ENCODE measurements at regions of chr6 and their contacts with region 1.

Region 1: DNA sequence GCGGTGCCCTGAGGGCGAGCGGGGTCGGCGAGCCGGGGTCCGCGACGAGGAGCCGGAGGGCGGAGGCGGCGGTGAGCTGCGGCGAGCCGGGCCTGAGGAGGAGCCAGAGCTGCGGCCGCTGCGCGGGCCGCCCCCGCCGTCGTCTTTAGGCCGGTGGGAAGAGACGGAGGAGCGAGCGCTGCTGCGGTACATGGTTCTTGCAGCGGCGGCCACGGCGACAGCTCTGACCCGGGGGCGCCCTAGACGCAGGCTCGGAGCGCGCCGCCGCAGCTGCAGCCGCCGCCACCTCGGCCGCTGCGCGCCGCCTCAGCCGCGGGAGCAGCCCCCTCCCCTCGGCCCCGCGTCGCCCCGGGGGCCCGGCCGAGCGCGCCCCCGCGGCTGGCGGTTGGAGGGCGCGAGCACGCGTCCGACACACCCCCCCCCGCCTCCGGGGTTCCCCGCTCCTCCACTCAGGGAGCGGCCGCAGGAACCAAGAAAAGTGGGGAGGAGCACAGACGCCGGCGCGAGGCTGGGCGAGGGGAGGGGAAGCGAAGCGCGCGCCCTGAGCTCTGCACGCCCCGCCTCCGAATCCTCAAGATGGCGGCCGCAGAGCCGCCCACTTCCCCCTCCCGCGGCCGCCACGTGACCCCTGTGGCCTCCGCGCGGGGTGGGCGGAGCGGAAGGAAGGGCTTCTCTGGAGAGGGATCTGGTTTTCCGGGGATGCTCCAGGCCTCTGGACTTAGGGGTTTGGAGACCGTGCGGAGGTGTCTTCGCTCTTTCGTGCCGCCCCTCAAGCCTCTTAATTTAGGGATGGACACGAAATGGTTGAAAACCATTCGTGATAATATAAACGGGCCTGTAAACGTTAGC is at the start of gene ZNF318:
- DNase-seq: peak; percentile 97
- ATAC-seq: peak; percentile 97
- H3K4me3 Mint-ChIP-seq: peak within 1 kb of the TSS; percentile 86
- H3K27ac Mint-ChIP-seq: peak within 1 kb of the TSS; percentile 95
- H3K4me1 Mint-ChIP-seq: peaks cover 37% of the 10 kb centered on the region
- H3K27me3 Mint-ChIP-seq: no peaks in the 10 kb centered on the region
- total RNA-seq, gene ZNF318: 11.2 to 12.9 TPM

Region 2: DNA sequence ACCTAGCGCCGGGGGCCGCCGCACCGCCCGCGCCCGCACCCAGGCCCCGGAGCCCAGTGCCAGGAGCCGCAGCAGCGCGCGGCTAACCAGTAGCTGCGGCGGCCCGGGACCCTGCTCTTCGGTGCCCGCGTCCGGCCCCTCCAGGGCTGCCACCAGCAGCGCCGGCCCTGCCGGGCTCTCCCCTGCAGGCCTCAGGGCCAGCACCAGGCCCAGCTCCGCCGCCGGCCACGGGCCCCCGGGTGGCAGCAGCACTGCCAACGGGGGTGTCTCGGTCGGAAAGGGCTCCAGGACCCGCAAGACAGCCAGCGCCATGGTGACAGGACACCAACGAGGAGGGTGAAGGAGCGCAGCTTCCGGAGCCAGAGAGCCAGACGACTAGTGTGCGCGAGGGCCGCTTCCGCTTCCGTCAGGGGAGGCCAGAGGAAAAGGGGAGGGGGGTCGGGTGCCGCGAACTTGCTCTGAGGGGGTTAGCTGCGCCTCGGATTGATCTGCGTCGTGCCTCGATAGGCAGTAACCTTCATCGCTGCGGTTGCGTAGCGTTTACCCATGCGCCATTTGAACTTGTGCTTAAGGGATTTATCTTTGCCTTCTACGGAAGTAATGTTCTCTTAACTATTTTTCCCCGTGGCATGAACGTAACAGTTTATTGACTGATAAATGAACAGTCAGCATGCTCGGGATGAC is 390.4 kb before region 1 on chr6 and contains the start of gene PEX6:
- CTCF ChIA-PET with region 1: no interaction called
- POLR2A ChIA-PET with region 1: no interaction called
- intact Hi-C with region 1: loop called in 1 of 2 experiments (anchors 2 kb)
- DNase-seq: peak; percentile 98
- ATAC-seq: peak; percentile 95
- H3K4me3 Mint-ChIP-seq: peak within 1 kb of the TSS; percentile 89
- H3K27ac Mint-ChIP-seq: peak within 1 kb of the TSS; percentile 95
- H3K4me1 Mint-ChIP-seq: peaks cover 45% of the 10 kb centered on the region
- H3K27me3 Mint-ChIP-seq: no peaks in the 10 kb centered on the region
- total RNA-seq, gene PEX6: 10.7 to 14.6 TPM

Region 3: GRCh38 chr6:43308101-43308989 is 61.1 kb before region 1 on chr6 and contains the start of gene CRIP3:
- CTCF ChIA-PET with region 1: no interaction called
- POLR2A ChIA-PET with region 1: no interaction called
- intact Hi-C with region 1: loop called in 1 of 2 experiments (anchors 2 kb)
- DNase-seq: peak; percentile 74
- ATAC-seq: peak; percentile 91
- H3K4me3 Mint-ChIP-seq: peak within 1 kb of the TSS; percentile 73
- H3K27ac Mint-ChIP-seq: peak within 1 kb of the TSS; percentile 59
- H3K4me1 Mint-ChIP-seq: peaks cover 3% of the 10 kb centered on the region
- H3K27me3 Mint-ChIP-seq: no peaks in the 10 kb centered on the region
- total RNA-seq, gene CRIP3: 1.6 to 1.8 TPM

Region 4: GRCh38 chr6:43427406-43428111 is 58.2 kb after region 1 on chr6 and contains the start of gene ABCC10:
- CTCF ChIA-PET with region 1: no interaction called
- POLR2A ChIA-PET with region 1: interaction called, 4 read pairs
- intact Hi-C with region 1: loop called (anchors 1 kb)
- DNase-seq: peak; percentile 97
- ATAC-seq: peak; percentile 97
- H3K4me3 Mint-ChIP-seq: peak within 1 kb of the TSS; percentile 94
- H3K27ac Mint-ChIP-seq: peak within 1 kb of the TSS; percentile 97
- H3K4me1 Mint-ChIP-seq: peaks cover 21% of the 10 kb centered on the region
- H3K27me3 Mint-ChIP-seq: no peaks in the 10 kb centered on the region
- total RNA-seq, gene ABCC10: 27.8 to 29.0 TPM

Region 5: DNA sequence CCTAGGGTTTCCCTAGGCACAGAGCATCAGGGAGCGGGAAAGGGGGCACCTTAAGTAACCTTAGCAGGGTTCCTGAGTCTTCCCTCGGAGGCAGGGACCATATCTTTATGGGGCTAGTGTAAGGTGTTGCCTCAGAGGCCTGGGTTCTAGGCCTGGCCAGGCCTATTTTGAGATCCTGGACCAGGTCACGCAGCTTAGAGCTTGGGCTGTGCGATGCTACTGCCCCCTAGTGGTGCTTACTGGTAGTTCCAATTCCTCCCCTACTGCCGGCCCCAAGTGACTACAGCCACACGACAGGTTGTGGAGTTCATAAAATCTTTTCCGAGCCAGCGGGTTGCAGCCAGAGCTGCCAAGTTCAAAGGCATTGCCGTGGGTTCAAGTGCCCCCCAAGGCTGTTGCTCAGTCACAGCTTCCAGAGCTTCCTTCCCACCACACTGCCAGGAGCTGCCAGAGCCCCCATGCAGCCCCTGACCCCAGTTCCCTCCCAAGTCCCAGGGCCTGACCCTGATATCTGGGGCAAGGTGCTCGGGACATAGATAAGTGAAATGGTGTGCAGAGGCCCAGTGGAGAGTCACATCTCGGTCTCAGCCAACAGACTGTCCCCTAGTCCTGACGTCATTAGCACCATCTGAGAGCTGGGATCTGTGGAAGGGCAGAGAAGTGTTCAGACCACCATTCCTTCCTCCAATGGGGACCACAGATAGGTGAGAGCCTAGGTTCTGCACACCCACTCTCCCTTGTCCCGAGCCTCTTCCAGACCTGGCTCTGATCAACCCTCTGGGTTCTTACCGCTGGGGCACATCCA is 137.5 kb after region 1 on chr6:
- CTCF ChIA-PET with region 1: interaction called, 4 read pairs
- POLR2A ChIA-PET with region 1: no interaction called
- intact Hi-C with region 1: loop called in 1 of 2 experiments (anchors 5 kb)
- DNase-seq: peak; percentile 89
- ATAC-seq: peak; percentile 83
- H3K4me3 Mint-ChIP-seq: no peak overlapping the region
- H3K27ac Mint-ChIP-seq: no peak overlapping the region
- H3K4me1 Mint-ChIP-seq: peaks cover 7% of the 10 kb centered on the region
- H3K27me3 Mint-ChIP-seq: peaks cover 12% of the 10 kb centered on the region

Region 6: GRCh38 chr6:43575772-43576551 is 206.6 kb after region 1 on chr6 and contains the starts of genes POLH and XPO5:
- CTCF ChIA-PET with region 1: no interaction called
- POLR2A ChIA-PET with region 1: no interaction called
- intact Hi-C with region 1: loop called in 1 of 2 experiments (anchors 5 kb)
- DNase-seq: peak; percentile 95
- ATAC-seq: peak; percentile 91
- H3K4me3 Mint-ChIP-seq: peak within 1 kb of the TSS; percentile 90
- H3K27ac Mint-ChIP-seq: peak within 1 kb of the TSS; percentile 86
- H3K4me1 Mint-ChIP-seq: peaks cover 44% of the 10 kb centered on the region
- H3K27me3 Mint-ChIP-seq: no peaks in the 10 kb centered on the region
- total RNA-seq, gene POLH: 35.2 to 37.9 TPM
- total RNA-seq, gene XPO5: 108 to 109 TPM

Region 7: GRCh38 chr6:44387346-44388133 is 1018.1 kb after region 1 on chr6 and contains the start of gene CDC5L:
- CTCF ChIA-PET with region 1: no interaction called
- POLR2A ChIA-PET with region 1: no interaction called
- intact Hi-C with region 1: loop called in 1 of 2 experiments (anchors 5 kb)
- DNase-seq: peak; percentile 95
- ATAC-seq: peak; percentile 95
- H3K4me3 Mint-ChIP-seq: peak within 1 kb of the TSS; percentile 97
- H3K27ac Mint-ChIP-seq: peak within 1 kb of the TSS; percentile 98
- H3K4me1 Mint-ChIP-seq: peaks cover 31% of the 10 kb centered on the region
- H3K27me3 Mint-ChIP-seq: no peaks in the 10 kb centered on the region
- total RNA-seq, gene CDC5L: 25.1 to 28.9 TPM

Measured in activated CD4-positive, alpha-beta T cell treated with anti-CD3 and anti-CD28 coated beads for 36 hours (primary cell).